Ovary (tissue), 10 donors: ENCODE measurements at regions of chr16 and their contacts with region 1.

Region 1: DNA sequence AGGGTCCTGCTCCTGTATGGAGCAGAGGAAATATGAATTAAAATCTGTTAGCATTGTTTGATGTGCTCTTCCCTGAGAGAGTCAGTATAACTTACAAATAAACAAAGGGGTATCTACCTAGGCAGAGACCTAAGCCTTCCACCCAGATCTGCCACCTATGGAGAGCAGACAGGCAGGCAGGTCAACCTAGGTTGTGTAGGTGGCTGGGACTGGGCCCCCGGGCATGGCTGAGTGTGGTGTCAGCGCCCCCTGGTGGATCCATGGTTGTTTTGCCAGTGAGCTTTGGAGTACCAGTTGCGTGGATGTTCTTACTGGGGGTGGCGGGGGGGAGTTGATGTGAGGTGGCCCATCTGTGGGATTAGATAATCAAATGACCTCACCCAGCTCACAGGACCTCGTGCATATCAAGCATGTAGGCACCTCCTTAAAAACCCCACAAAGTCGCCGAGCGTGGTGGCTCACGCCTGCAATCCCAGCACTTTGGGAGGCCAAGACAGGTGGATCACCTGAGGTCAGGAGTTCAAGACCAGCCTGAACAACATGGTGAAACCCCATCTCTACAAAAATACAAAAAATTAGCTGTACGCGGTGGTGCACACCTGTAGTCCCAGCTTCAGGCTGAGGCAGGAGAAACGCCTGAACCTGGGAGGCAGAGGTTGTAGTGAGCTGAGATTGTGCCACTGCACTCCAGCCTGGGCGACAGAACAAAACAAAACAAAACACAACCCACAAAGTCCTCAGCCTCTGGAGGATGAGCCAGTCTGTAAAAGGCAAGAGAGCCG is 17.6 kb downstream of the DUS2 start:
- DNase-seq: peak; percentile 63 to 84 (median 78)
- H3K4me3 ChIP-seq: no peak overlapping the region
- H3K27ac ChIP-seq: no peak overlapping the region
- H3K4me1 ChIP-seq: no peaks in the 10 kb centered on the region
- H3K27me3 ChIP-seq: no peaks in the 10 kb centered on the region
- CTCF ChIP-seq: peak; percentile 49 to 77 (median 73)
- EP300 ChIP-seq: no peak
- POLR2A ChIP-seq: no peak

Region 2: GRCh38 chr16:67719048-67719777 is 321.5 kb before region 1 on chr16 and contains the start of gene GFOD2:
- intact Hi-C with region 1: no loop called
- DNase-seq: peak; percentile 97 to 99 (median 98)
- H3K4me3 ChIP-seq: peak within 1 kb of the TSS; percentile 96
- H3K27ac ChIP-seq: peak within 1 kb of the TSS in 1 of 2 donors; percentile 46
- H3K4me1 ChIP-seq: peaks cover 3% of the 10 kb centered on the region
- H3K27me3 ChIP-seq: no peaks in the 10 kb centered on the region
- CTCF ChIP-seq: no peak
- EP300 ChIP-seq: no peak
- POLR2A ChIP-seq: peak; percentile 84
- total RNA-seq, gene GFOD2: 8.6 to 15.9 (median 13.4) TPM

Region 3: GRCh38 chr16:67816240-67817031 is 224.3 kb before region 1 on chr16:
- intact Hi-C with region 1: loop called in 2 of 4 experiments (anchors 5 to 10 kb)
- DNase-seq: peak; percentile 81 to 92 (median 88)
- H3K4me3 ChIP-seq: no peak overlapping the region
- H3K27ac ChIP-seq: no peak overlapping the region
- H3K4me1 ChIP-seq: no peaks in the 10 kb centered on the region
- H3K27me3 ChIP-seq: no peaks in the 10 kb centered on the region
- CTCF ChIP-seq: peak; percentile 98 to 100 (median 99)
- EP300 ChIP-seq: no peak
- POLR2A ChIP-seq: no peak

Region 4: GRCh38 chr16:67993189-67994039 is 47.3 kb before region 1 on chr16:
- intact Hi-C with region 1: loop called in 1 of 4 experiments (anchors 5 kb)
- DNase-seq: peak; percentile 75 to 87 (median 80)
- H3K4me3 ChIP-seq: no peak overlapping the region
- H3K27ac ChIP-seq: no peak overlapping the region
- H3K4me1 ChIP-seq: peaks cover 2% of the 10 kb centered on the region
- H3K27me3 ChIP-seq: no peaks in the 10 kb centered on the region
- CTCF ChIP-seq: peak; percentile 94 to 96 (median 95)
- EP300 ChIP-seq: no peak
- POLR2A ChIP-seq: no peak